ENCODE measurements at regions of chr3 and their contacts with region 1.

Region 1: GRCh38 chr3:59049671-59050331 is at the start of gene CFAP20DC:
- DNase-seq: peak; percentile 91 to 97 (median 93)
- H3K4me3 ChIP-seq: peak within 1 kb of the TSS in 3 of 4 donors; percentile 61 to 91 (median 68)
- H3K27ac ChIP-seq: peak within 1 kb of the TSS in 3 of 5 donors; percentile 15 to 70 (median 41)
- H3K4me1 ChIP-seq: peaks cover 0 to 7% of the 10 kb centered on the region in 2 donors
- H3K27me3 ChIP-seq: no peaks in the 10 kb centered on the region
- CTCF ChIP-seq: no peak
- POLR2A ChIP-seq: peak; percentile 65 to 80
- total RNA-seq, gene CFAP20DC: 0.35 to 6.0 (median 2.6) TPM

Region 2: DNA sequence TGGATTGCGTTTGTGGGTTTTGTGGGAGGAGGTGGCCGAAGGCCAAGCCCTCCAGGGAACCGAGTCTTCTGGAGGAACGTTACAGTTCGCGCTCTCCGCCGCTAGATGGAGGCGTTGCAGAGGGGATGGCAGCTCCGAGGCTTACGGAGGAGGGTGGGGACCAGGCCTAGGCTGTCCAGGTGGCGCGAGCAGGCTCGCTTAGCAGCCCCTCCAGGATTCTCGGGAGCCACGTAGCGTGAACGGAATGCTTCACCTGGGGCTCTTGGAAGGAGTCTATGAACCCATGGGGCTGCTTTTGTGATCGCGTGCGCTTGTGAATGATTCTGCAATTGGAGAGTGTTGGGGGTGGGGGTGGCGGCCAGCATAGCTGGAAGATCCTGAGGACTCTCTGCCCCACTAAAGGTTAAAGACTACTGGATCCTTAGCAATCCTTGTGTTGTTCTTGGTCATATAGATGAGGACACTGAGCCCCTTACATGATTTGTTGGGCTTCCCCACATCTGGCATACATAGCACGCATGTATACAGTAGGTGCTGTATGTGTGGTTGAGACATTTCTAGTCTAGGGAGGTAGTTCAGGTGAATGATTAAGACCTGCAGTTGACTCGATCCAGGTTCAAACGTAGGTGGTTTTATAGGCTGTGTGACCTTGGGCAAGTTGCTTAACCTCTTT is 409.0 kb before region 1 on chr3:
- intact Hi-C with region 1: loop called (anchors 10 kb)
- DNase-seq: peak; percentile 64 to 84 (median 77)
- H3K4me3 ChIP-seq: no peak overlapping the region
- H3K27ac ChIP-seq: no peak overlapping the region
- H3K4me1 ChIP-seq: no peaks in the 10 kb centered on the region
- H3K27me3 ChIP-seq: no peaks in the 10 kb centered on the region
- CTCF ChIP-seq: peak; percentile 74 to 89 (median 84)
- POLR2A ChIP-seq: no peak

Region 3: DNA sequence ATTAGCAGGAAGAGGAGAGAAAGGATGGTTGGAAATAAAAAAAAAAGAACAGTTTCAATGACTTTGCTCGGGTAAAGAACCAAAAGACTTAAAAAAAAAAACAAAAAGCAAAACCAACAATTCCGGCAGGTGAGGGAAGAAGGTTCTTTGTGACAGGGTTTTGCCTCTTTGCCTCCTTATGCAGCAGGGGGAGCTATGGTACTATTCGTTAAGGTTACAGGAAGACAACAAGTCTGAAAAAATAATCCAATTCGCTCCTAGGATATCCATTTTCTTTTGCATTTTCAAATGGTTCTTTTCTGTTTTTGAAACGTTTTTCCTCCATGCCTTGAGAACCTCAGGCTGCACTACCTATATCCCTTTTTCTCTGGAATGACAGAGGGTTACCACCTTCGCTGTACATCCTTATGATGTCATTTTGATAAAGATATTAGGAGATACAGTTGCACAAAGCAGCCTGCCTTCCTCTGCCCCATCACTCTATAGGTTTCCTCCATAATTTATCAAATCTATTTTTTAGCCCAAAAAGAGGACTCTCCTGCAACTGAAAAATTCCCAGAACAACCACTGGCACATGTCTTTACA is 55.0 kb before region 1 on chr3:
- intact Hi-C with region 1: loop called (anchors 5 to 10 kb)
- DNase-seq: peak; percentile 32 to 71 (median 52)
- H3K4me3 ChIP-seq: no peak overlapping the region
- H3K27ac ChIP-seq: no peak overlapping the region
- H3K4me1 ChIP-seq: peaks cover 11 to 18% of the 10 kb centered on the region in 2 donors
- H3K27me3 ChIP-seq: no peaks in the 10 kb centered on the region
- CTCF ChIP-seq: peak; percentile 45 to 90 (median 64)
- POLR2A ChIP-seq: no peak